ENCODE measurements at regions of chr12 and their contacts with region 1.

Region 1: DNA sequence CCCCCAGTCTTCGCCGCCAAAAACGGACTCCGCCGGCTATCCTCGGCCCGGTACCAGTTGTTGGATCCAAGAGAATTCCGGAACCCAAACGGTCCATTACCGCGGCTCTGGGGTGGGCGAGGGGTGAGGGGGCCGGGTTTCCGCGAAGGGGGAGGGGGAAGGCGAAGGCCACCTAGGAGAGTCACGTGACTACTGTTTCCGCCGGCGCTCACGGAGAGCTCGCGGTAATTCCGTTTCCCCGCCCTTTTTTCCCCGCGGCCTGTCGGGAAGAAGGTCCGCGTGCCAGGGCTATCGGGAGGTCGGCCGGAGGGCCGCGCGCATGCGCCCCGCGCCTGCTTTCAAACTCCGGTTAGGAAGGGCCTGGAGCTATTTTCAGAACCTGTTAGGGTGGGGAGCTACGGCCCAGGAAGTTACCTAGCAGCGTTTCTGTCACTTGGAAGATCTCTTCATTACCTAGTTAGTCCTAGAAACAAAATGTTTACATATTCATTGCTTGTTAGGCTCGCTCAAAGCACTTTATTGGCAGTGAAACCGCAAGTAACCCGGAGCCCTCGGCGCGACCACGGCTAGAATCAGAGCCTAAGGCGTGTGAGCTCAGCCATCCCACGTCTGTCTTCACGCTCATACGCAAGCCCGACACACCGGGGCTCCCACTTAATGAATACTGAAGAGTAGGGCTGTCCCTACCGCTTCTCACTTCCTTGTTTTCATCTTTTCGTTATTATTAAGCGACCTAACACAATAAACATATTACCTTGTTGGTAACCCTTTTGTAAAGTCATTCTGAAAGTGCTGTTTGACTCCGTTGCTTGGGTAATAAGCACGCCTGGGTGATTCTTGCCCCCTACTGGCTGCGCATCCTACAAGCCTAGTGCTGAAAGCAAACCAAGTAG is 624 bp upstream of the SBNO1 start:
- DNase-seq: peak; percentile 95 to 100 (median 97)
- ATAC-seq: peak; percentile 74
- H3K4me3 ChIP-seq: peak overlapping the region; percentile 69 to 79
- H3K4me3 Mint-ChIP-seq: peak overlapping the region; percentile 90
- H3K27ac ChIP-seq: peak overlapping the region; percentile 87 to 93
- H3K27ac Mint-ChIP-seq: peak overlapping the region; percentile 92
- H3K4me1 ChIP-seq: peaks cover 18% of the 10 kb centered on the region
- H3K4me1 Mint-ChIP-seq: peaks cover 24% of the 10 kb centered on the region
- H3K27me3 ChIP-seq: no peaks in the 10 kb centered on the region
- H3K27me3 Mint-ChIP-seq: no peaks in the 10 kb centered on the region
- CTCF ChIP-seq: peak; percentile 93

Region 2: GRCh38 chr12:122834104-122834920 is 531.0 kb before region 1 on chr12:
- CTCF ChIA-PET with region 1: no interaction called
- POLR2A ChIA-PET with region 1: no interaction called
- intact Hi-C with region 1: loop called in 1 of 2 experiments (anchors 10 kb)
- DNase-seq: peak in 3 of 9 experiments; percentile 22 to 56 (median 44)
- ATAC-seq: peak; percentile 15
- H3K4me3 ChIP-seq: peak overlapping the region; percentile 40 to 42
- H3K4me3 Mint-ChIP-seq: peak overlapping the region; percentile 91
- H3K27ac ChIP-seq: no peak overlapping the region
- H3K27ac Mint-ChIP-seq: peak overlapping the region; percentile 94
- H3K4me1 ChIP-seq: peaks cover 20% of the 10 kb centered on the region
- H3K4me1 Mint-ChIP-seq: peaks cover 42% of the 10 kb centered on the region
- H3K27me3 ChIP-seq: no peaks in the 10 kb centered on the region
- H3K27me3 Mint-ChIP-seq: no peaks in the 10 kb centered on the region
- CTCF ChIP-seq: no peak

Region 3: DNA sequence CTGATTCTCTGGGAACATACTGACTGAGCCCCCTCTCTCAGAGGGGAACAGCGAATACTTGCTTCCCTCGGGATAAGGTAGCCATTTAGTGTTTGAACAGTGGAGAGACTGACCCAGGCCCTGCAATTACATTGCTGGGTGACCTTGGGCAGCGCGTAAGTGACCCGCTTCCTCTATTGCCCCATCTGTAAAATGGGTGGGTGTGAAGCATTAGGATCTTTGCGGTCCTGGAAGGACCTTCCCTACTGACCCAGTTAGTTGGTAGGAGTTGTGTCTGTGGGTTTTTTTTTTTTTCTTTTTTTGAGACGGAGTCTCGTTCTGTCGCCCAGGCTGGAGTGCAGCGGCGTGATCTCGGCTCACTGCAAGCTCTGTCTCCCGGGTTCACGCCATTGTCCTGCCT is 17.4 kb after region 1 on chr12:
- CTCF ChIA-PET with region 1: interaction called, 16 read pairs
- POLR2A ChIA-PET with region 1: interaction called, 26 read pairs
- intact Hi-C with region 1: loop called (anchors 1 kb)
- DNase-seq: no peak
- ATAC-seq: no peak
- H3K4me3 ChIP-seq: no peak overlapping the region
- H3K4me3 Mint-ChIP-seq: peak overlapping the region; percentile 49
- H3K27ac ChIP-seq: no peak overlapping the region
- H3K27ac Mint-ChIP-seq: no peak overlapping the region
- H3K4me1 ChIP-seq: peaks cover 10% of the 10 kb centered on the region
- H3K4me1 Mint-ChIP-seq: peaks cover 12% of the 10 kb centered on the region
- H3K27me3 ChIP-seq: no peaks in the 10 kb centered on the region
- H3K27me3 Mint-ChIP-seq: no peaks in the 10 kb centered on the region
- CTCF ChIP-seq: no peak

Region 4: GRCh38 chr12:123457980-123458783 is 92.9 kb after region 1 on chr12 and contains the start of gene SNRNP35:
- CTCF ChIA-PET with region 1: interaction called, 4 read pairs
- POLR2A ChIA-PET with region 1: interaction called, 10 read pairs
- intact Hi-C with region 1: loop called (anchors 1 kb)
- DNase-seq: peak; percentile 75 to 94 (median 84)
- ATAC-seq: peak; percentile 78
- H3K4me3 ChIP-seq: peak within 1 kb of the TSS; percentile 96 to 99
- H3K4me3 Mint-ChIP-seq: peak within 1 kb of the TSS; percentile 99
- H3K27ac ChIP-seq: peak within 1 kb of the TSS; percentile 97 to 99
- H3K27ac Mint-ChIP-seq: peak within 1 kb of the TSS; percentile 100
- H3K4me1 ChIP-seq: peaks cover 13% of the 10 kb centered on the region
- H3K4me1 Mint-ChIP-seq: peaks cover 31% of the 10 kb centered on the region
- H3K27me3 ChIP-seq: no peaks in the 10 kb centered on the region
- H3K27me3 Mint-ChIP-seq: no peaks in the 10 kb centered on the region
- CTCF ChIP-seq: no peak
- total RNA-seq, gene SNRNP35: 24.9 to 27.4 TPM

Region 5: DNA sequence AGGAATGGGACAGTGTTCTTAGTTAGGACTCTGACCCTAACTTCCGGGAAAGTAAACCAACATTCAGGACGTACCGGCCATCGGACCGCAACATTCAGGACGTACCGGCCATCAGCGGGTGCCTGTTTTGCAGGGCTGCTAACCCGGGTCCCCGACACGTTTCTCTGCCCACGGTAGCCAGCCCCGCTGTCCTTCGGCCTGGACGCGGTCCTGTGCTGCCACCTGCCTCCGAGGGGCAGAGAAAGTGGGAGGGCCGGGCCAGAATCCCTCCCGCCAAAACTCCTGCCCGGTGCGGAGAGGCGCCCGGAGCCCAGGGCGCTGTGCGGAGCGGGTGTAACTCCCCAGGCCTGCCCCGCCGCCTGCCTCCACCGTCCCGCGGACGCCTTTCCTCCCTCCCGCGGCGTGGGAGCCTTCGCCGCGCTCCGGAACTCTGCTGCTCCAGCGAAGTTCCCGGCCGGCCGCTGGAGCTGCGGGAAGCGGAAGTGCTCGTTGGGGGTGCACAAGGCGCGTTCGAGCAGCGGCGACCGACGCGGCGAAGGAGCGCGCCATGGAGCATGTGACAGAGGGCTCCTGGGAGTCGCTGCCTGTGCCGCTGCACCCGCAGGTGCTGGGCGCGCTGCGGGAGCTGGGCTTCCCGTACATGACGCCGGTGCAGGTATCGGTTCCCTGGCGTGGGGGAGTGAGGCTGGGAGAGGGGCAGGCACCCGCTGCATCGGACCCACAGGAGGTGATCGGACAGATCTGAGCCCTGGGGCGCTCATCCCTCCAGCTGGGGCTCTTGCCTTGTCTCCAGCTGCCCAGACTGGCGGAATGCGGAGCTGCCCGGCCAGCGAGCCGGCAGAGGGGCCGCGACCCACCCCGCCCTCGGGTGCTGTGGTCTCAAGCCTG is 236.6 kb after region 1 on chr12 and contains the start of gene DDX55:
- CTCF ChIA-PET with region 1: interaction called, 4 read pairs
- POLR2A ChIA-PET with region 1: interaction called, 3 read pairs
- intact Hi-C with region 1: loop called (anchors 5 kb)
- DNase-seq: peak; percentile 71 to 94 (median 87)
- ATAC-seq: peak; percentile 93
- H3K4me3 ChIP-seq: peak within 1 kb of the TSS; percentile 92 to 94
- H3K4me3 Mint-ChIP-seq: peak within 1 kb of the TSS; percentile 98
- H3K27ac ChIP-seq: peak within 1 kb of the TSS; percentile 78 to 89
- H3K27ac Mint-ChIP-seq: peak within 1 kb of the TSS; percentile 94
- H3K4me1 ChIP-seq: peaks cover 16% of the 10 kb centered on the region
- H3K4me1 Mint-ChIP-seq: peaks cover 31% of the 10 kb centered on the region
- H3K27me3 ChIP-seq: no peaks in the 10 kb centered on the region
- H3K27me3 Mint-ChIP-seq: no peaks in the 10 kb centered on the region
- CTCF ChIP-seq: peak; percentile 42
- total RNA-seq, gene DDX55: 41.1 to 44.5 TPM

Region 6: GRCh38 chr12:124053851-124054250 is 688.6 kb after region 1 on chr12:
- CTCF ChIA-PET with region 1: no interaction called
- POLR2A ChIA-PET with region 1: no interaction called
- intact Hi-C with region 1: no loop called
- DNase-seq: peak in 1 of 9 experiments; percentile 13
- ATAC-seq: no peak
- H3K4me3 ChIP-seq: no peak overlapping the region
- H3K4me3 Mint-ChIP-seq: no peak overlapping the region
- H3K27ac ChIP-seq: no peak overlapping the region
- H3K27ac Mint-ChIP-seq: no peak overlapping the region
- H3K4me1 ChIP-seq: no peaks in the 10 kb centered on the region
- H3K4me1 Mint-ChIP-seq: no peaks in the 10 kb centered on the region
- H3K27me3 ChIP-seq: no peaks in the 10 kb centered on the region
- H3K27me3 Mint-ChIP-seq: no peaks in the 10 kb centered on the region
- CTCF ChIP-seq: no peak